Right cardiac atrium (tissue), 5 donors: ENCODE measurements at regions of chr18 and their contacts with region 1.

Region 1: DNA sequence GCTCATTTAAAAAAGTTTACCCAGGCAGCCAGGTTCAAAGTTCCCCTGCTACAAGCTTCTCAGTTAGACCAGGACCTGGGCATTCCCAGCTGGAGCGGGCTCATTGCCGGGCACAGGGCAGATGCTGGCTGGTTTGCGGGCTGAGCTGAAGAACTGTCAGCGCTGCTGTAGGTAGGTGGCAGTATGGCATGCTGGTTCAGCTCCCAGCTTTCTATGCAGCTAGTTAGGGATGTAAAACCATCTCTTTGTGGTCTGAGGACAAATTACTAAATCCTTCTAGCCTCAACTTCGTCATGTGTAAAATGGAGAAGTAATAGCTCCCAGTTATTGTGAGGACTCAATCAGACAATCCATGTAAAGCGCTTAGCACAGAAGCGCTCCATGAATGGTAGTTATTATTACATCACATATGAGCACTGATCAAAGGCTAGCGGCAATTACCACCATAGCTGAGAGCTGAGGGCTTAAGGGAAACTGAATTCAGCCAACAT is 2.4 kb upstream of the LDLRAD4 start:
- DNase-seq: peak; percentile 74 to 89 (median 81)
- ATAC-seq: peak; percentile 75 to 78
- H3K4me3 ChIP-seq: no peak overlapping the region
- H3K27ac ChIP-seq: no peak overlapping the region
- H3K4me1 ChIP-seq: peaks cover 13% of the 10 kb centered on the region
- H3K27me3 ChIP-seq: no peaks in the 10 kb centered on the region

Region 2: DNA sequence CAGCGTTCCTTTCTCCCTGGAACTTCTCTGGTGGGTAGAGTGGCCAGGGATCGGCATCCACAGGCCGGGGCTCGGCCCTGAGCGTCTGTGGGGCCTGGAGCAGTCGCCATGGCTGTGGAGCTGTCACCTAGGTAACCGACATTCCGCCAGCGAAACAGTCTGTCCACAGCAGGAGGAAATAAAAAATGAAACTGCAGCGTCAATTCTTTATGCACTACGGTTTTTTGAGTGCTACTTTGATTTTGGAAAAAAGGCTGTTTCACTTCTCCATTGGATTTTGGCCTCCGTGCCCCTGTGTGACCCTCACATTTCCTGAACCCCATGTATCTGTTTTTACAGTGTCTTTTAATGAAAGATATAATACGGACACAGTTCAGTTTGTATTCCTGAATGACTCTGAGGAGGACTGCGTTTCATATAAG is 165.8 kb after region 1 on chr18:
- intact Hi-C with region 1: loop called in 3 of 4 experiments (anchors 5 to 10 kb)
- DNase-seq: peak; percentile 78 to 90 (median 90)
- ATAC-seq: peak; percentile 87 to 90
- H3K4me3 ChIP-seq: peak overlapping the region; percentile 40
- H3K27ac ChIP-seq: peak overlapping the region; percentile 85
- H3K4me1 ChIP-seq: peaks cover 24% of the 10 kb centered on the region
- H3K27me3 ChIP-seq: no peaks in the 10 kb centered on the region

Region 3: DNA sequence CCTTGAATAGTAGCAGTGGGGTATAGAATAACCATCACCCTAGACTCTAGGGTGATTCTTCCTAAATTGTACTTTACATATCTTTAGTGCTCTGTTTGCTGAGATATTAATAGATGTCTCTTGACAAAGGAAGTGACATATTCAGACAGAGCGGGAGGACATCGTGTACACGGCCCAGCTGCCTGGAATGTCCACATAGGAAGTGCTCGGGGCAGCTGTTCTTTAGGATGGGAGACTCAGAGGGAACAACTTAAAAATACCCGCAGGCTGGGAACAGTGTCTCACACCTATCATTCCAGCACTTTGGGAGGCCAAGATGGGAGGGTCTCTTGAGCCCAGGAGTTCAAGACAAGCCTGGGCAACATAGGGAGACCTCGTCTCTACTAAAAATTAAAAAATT is 304.2 kb after region 1 on chr18:
- intact Hi-C with region 1: loop called in 2 of 4 experiments (anchors 10 kb)
- DNase-seq: peak; percentile 55 to 82 (median 68)
- ATAC-seq: peak; percentile 88 to 92
- H3K4me3 ChIP-seq: no peak overlapping the region
- H3K27ac ChIP-seq: peak overlapping the region; percentile 73
- H3K4me1 ChIP-seq: peaks cover 6% of the 10 kb centered on the region
- H3K27me3 ChIP-seq: no peaks in the 10 kb centered on the region

Region 4: GRCh38 chr18:13629841-13630715 is 413.9 kb after region 1 on chr18:
- intact Hi-C with region 1: loop called (anchors 2 to 10 kb)
- DNase-seq: peak in 2 of 3 donors; percentile 46 to 81
- ATAC-seq: peak; percentile 84 to 87
- H3K4me3 ChIP-seq: no peak overlapping the region
- H3K27ac ChIP-seq: peak overlapping the region; percentile 29
- H3K4me1 ChIP-seq: no peaks in the 10 kb centered on the region
- H3K27me3 ChIP-seq: no peaks in the 10 kb centered on the region